Caco-2 (cell line): ENCODE measurements at regions of chr20 and their contacts with region 1.

Region 1: GRCh38 chr20:41572010-41572560 is 46.1 kb downstream of the CHD6 start:
- DNase-seq: peak; percentile 71 to 73
- H3K4me3 ChIP-seq: no peak overlapping the region
- H3K4me3 Mint-ChIP-seq: no peak overlapping the region
- H3K27ac Mint-ChIP-seq: no peak overlapping the region
- H3K4me1 ChIP-seq: peaks cover 19% of the 10 kb centered on the region
- H3K4me1 Mint-ChIP-seq: peaks cover 16% of the 10 kb centered on the region
- H3K27me3 ChIP-seq: no peaks in the 10 kb centered on the region
- H3K27me3 Mint-ChIP-seq: no peaks in the 10 kb centered on the region
- CTCF ChIP-seq: peak; percentile 83 to 91

Region 2: GRCh38 chr20:41598719-41599118 is 26.6 kb after region 1 on chr20:
- CTCF ChIA-PET with region 1: no interaction called
- POLR2A ChIA-PET with region 1: no interaction called
- intact Hi-C with region 1: no loop called
- DNase-seq: no peak
- H3K4me3 ChIP-seq: no peak overlapping the region
- H3K4me3 Mint-ChIP-seq: no peak overlapping the region
- H3K27ac Mint-ChIP-seq: no peak overlapping the region
- H3K4me1 ChIP-seq: no peaks in the 10 kb centered on the region
- H3K4me1 Mint-ChIP-seq: peaks cover 7% of the 10 kb centered on the region
- H3K27me3 ChIP-seq: no peaks in the 10 kb centered on the region
- H3K27me3 Mint-ChIP-seq: no peaks in the 10 kb centered on the region
- CTCF ChIP-seq: no peak

Region 3: GRCh38 chr20:41609474-41609873 is 37.4 kb after region 1 on chr20:
- CTCF ChIA-PET with region 1: interaction called, 13 read pairs
- POLR2A ChIA-PET with region 1: interaction called, 3 read pairs
- intact Hi-C with region 1: no loop called
- DNase-seq: no peak
- H3K4me3 ChIP-seq: no peak overlapping the region
- H3K4me3 Mint-ChIP-seq: no peak overlapping the region
- H3K27ac Mint-ChIP-seq: no peak overlapping the region
- H3K4me1 ChIP-seq: no peaks in the 10 kb centered on the region
- H3K4me1 Mint-ChIP-seq: peaks cover 8% of the 10 kb centered on the region
- H3K27me3 ChIP-seq: no peaks in the 10 kb centered on the region
- H3K27me3 Mint-ChIP-seq: no peaks in the 10 kb centered on the region
- CTCF ChIP-seq: no peak

Region 4: GRCh38 chr20:41617931-41618806 is 46.1 kb after region 1 on chr20 and contains the start of gene CHD6:
- CTCF ChIA-PET with region 1: interaction called, 29 read pairs
- POLR2A ChIA-PET with region 1: interaction called, 5 read pairs
- intact Hi-C with region 1: loop called (anchors 2 kb)
- DNase-seq: peak; percentile 100
- H3K4me3 ChIP-seq: peak within 1 kb of the TSS; percentile 67
- H3K4me3 Mint-ChIP-seq: peak within 1 kb of the TSS; percentile 86
- H3K27ac Mint-ChIP-seq: peak within 1 kb of the TSS; percentile 67
- H3K4me1 ChIP-seq: peaks cover 26% of the 10 kb centered on the region
- H3K4me1 Mint-ChIP-seq: peaks cover 42% of the 10 kb centered on the region
- H3K27me3 ChIP-seq: no peaks in the 10 kb centered on the region
- H3K27me3 Mint-ChIP-seq: no peaks in the 10 kb centered on the region
- CTCF ChIP-seq: no peak
- total RNA-seq, gene CHD6: 80.5 and 88.1 TPM in 2 replicates

Region 5: DNA sequence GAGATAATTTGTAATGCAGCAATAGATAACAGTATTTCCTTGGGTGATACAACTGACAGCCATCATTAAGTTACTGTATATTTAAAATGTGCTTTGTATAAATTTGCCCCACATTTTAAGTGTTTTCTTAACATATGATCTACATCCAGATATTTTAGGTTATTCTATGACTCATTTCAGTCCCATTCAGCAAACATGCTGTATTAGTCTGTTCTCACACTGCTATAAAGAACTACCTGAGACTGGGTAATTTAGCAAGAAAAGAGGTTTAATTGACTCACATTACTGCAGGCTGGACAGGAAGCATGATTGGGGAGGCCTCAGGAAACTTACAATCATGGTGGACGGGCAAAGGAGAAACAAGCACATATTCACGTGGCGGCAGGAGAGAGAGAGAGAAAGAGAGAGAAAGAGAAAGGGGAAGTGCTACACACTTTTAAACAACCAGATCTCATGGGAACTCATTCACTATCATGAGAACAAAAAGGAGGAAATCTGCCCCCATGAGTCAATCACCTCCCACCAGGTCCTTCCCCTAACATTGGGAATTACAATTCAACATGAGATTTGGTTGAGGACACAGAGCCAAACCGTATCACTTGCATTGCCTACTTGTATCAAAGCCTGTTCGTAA is 55.6 kb after region 1 on chr20:
- CTCF ChIA-PET with region 1: no interaction called
- POLR2A ChIA-PET with region 1: no interaction called
- intact Hi-C with region 1: loop called (anchors 2 kb)
- DNase-seq: no peak
- H3K4me3 ChIP-seq: no peak overlapping the region
- H3K4me3 Mint-ChIP-seq: no peak overlapping the region
- H3K27ac Mint-ChIP-seq: no peak overlapping the region
- H3K4me1 ChIP-seq: no peaks in the 10 kb centered on the region
- H3K4me1 Mint-ChIP-seq: no peaks in the 10 kb centered on the region
- H3K27me3 ChIP-seq: no peaks in the 10 kb centered on the region
- H3K27me3 Mint-ChIP-seq: no peaks in the 10 kb centered on the region
- CTCF ChIP-seq: no peak

Region 6: DNA sequence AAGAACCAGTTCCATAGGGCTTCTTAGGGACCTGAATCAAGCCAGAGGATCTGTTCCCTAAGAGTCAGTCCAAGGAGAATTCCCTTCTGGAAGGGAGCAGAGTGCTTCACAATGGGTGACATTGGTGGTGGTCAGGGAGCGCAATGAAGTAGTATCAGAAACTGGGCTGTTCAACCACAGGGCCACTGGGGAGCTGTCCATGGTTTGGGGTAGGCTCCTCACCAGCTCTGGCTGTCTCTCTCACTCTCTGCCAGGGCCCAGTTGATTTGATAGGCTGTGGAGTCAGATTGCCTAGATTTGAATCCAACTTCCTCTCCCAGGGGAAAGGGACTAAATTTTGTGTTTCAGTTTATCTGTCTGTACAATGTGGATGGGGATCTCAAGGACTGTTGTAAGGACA is 82.8 kb after region 1 on chr20:
- CTCF ChIA-PET with region 1: interaction called, 12 read pairs
- POLR2A ChIA-PET with region 1: no interaction called
- intact Hi-C with region 1: loop called (anchors 10 kb)
- DNase-seq: peak; percentile 67 to 79
- H3K4me3 ChIP-seq: no peak overlapping the region
- H3K4me3 Mint-ChIP-seq: no peak overlapping the region
- H3K27ac Mint-ChIP-seq: no peak overlapping the region
- H3K4me1 ChIP-seq: peaks cover 25% of the 10 kb centered on the region
- H3K4me1 Mint-ChIP-seq: peaks cover 23% of the 10 kb centered on the region
- H3K27me3 ChIP-seq: no peaks in the 10 kb centered on the region
- H3K27me3 Mint-ChIP-seq: no peaks in the 10 kb centered on the region
- CTCF ChIP-seq: no peak

Region 7: GRCh38 chr20:41693136-41693979 is 121.3 kb after region 1 on chr20:
- CTCF ChIA-PET with region 1: interaction called, 35 read pairs
- POLR2A ChIA-PET with region 1: interaction called, 3 read pairs
- intact Hi-C with region 1: loop called (anchors 1 kb)
- DNase-seq: peak; percentile 92 to 95
- H3K4me3 ChIP-seq: peak overlapping the region; percentile 43
- H3K4me3 Mint-ChIP-seq: peak overlapping the region; percentile 86
- H3K27ac Mint-ChIP-seq: peak overlapping the region; percentile 90
- H3K4me1 ChIP-seq: peaks cover 16% of the 10 kb centered on the region
- H3K4me1 Mint-ChIP-seq: peaks cover 19% of the 10 kb centered on the region
- H3K27me3 ChIP-seq: no peaks in the 10 kb centered on the region
- H3K27me3 Mint-ChIP-seq: peaks cover 2% of the 10 kb centered on the region
- CTCF ChIP-seq: peak; percentile 66 to 68

Region 8: DNA sequence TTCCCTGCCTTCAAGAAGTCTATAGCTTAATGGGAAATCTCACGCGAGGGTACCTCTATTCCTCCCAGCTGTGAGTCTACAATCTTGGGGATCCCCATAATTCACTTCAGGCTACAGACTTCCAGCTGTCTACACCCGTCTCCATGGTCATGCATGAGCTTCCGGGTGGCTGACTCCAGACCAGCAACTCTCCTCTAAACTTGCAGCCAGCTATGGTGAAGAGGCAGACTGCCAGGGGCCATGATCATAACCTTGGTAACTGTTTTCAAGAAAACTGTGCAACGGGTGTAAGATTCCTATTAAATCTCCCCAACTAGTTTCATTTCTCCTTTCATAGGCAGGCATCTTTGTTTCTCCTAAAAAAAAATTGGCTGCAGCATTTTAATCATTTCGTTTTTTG is 580.5 kb after region 1 on chr20:
- CTCF ChIA-PET with region 1: no interaction called
- POLR2A ChIA-PET with region 1: no interaction called
- intact Hi-C with region 1: no loop called
- DNase-seq: no peak
- H3K4me3 ChIP-seq: no peak overlapping the region
- H3K4me3 Mint-ChIP-seq: no peak overlapping the region
- H3K27ac Mint-ChIP-seq: no peak overlapping the region
- H3K4me1 ChIP-seq: no peaks in the 10 kb centered on the region
- H3K4me1 Mint-ChIP-seq: no peaks in the 10 kb centered on the region
- H3K27me3 ChIP-seq: no peaks in the 10 kb centered on the region
- H3K27me3 Mint-ChIP-seq: peaks cover 12% of the 10 kb centered on the region
- CTCF ChIP-seq: no peak